IMR-90 (cell line): ENCODE measurements at regions of chr2 and their contacts with region 1.

Region 1: GRCh38 chr2:171608168-171608567 is 79.1 kb upstream of the DYNC1I2 start:
- DNase-seq: no peak
- ATAC-seq: no peak
- H3K4me3 ChIP-seq: no peak overlapping the region
- H3K27ac ChIP-seq: no peak overlapping the region
- H3K4me1 ChIP-seq: no peaks in the 10 kb centered on the region
- H3K27me3 ChIP-seq: peaks cover 10% of the 10 kb centered on the region
- CTCF ChIP-seq: no peak
- POLR2A ChIP-seq: no peak
- RAD21 ChIP-seq: no peak

Region 2: GRCh38 chr2:171670655-171671054 is 62.5 kb after region 1 on chr2:
- CTCF ChIA-PET with region 1: no interaction called
- POLR2A ChIA-PET with region 1: no interaction called
- dilution Hi-C with region 1: no loop called
- in situ Hi-C with region 1: no loop called
- intact Hi-C with region 1: loop called (anchors 5 kb)
- DNase-seq: peak; percentile 21
- ATAC-seq: no peak
- H3K4me3 ChIP-seq: no peak overlapping the region
- H3K27ac ChIP-seq: no peak overlapping the region
- H3K4me1 ChIP-seq: no peaks in the 10 kb centered on the region
- H3K27me3 ChIP-seq: peaks cover 9% of the 10 kb centered on the region
- CTCF ChIP-seq: no peak
- POLR2A ChIP-seq: no peak
- RAD21 ChIP-seq: no peak